T-cell (primary cell): ENCODE measurements at regions of chr10 and their contacts with region 1.

Region 1: DNA sequence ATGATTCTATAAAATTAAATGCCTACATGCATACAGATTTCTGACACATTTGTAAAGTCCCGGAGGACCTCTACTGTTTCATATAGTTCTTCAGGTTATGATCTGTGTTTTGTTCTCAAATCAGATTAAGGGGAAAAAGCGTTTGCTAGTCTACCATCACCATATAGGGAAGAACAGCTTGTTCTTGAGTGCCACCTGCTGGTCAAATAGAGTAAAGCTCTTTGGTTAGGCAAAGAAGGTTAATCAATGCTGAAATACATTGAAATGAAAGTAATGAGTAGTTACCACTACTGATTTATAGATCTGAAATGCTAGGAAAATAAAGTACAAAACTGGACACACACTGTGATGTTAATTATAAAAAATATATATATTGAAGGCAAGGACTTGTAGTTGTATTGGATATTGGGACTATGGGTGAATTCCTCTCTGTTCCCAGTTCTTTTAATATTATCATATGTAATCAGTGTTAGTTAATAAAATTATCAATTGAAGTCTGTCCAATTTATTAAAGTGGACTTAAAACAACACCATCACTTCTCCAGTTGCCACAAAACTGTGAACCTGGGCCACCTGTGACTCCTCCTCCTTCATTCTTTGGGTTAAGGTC is 72.6 kb upstream of the PDLIM1 start:
- DNase-seq: peak in 22 of 35 experiments; percentile 4 to 77 (median 21)
- ATAC-seq: peak; percentile 52 to 72 (median 62)
- H3K4me3 ChIP-seq: no peak overlapping the region
- H3K4me3 Mint-ChIP-seq: no peak overlapping the region
- H3K27ac ChIP-seq: no peak overlapping the region
- H3K27ac Mint-ChIP-seq: no peak overlapping the region
- H3K4me1 ChIP-seq: no peaks in the 10 kb centered on the region
- H3K4me1 Mint-ChIP-seq: no peaks in the 10 kb centered on the region
- H3K27me3 ChIP-seq: no peaks in the 10 kb centered on the region
- H3K27me3 Mint-ChIP-seq: peaks cover 6 to 11% of the 10 kb centered on the region in 2 donors

Region 2: DNA sequence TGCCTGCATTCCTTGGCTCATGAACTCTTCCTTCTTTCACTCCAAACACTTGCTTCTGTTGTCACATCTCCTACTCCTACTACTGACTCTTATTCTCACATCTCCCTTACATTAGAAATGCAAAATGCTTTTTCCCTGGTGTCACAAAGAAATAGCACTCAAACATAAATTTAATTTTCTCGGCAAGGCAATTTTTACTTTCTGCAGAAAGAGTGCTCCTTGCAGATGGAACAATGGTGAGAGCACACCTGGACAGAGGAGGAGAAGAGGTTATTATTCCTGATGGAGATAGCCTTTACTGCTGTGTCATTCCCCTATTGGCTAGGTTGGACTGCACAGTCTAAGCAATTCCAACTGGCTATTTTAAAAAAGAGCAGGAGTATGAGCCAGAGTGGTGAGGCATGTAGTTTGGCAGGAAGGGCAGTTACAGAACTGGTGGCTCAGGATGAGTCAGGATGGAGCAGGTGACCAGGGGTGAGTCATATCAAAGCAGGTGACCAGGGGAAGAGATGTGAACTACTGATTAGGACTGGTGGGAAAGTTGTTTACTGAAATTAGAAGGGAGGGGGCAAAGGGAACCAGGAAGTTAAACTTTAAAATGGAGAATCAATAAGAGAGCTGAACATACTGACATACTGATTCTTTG is 372.0 kb before region 1 on chr10:
- CTCF ChIA-PET with region 1: no interaction called
- POLR2A ChIA-PET with region 1: no interaction called
- DNase-seq: no peak
- ATAC-seq: no peak
- H3K4me3 ChIP-seq: no peak overlapping the region
- H3K4me3 Mint-ChIP-seq: no peak overlapping the region
- H3K27ac ChIP-seq: no peak overlapping the region
- H3K27ac Mint-ChIP-seq: no peak overlapping the region
- H3K4me1 ChIP-seq: no peaks in the 10 kb centered on the region
- H3K4me1 Mint-ChIP-seq: no peaks in the 10 kb centered on the region
- H3K27me3 ChIP-seq: no peaks in the 10 kb centered on the region
- H3K27me3 Mint-ChIP-seq: no peaks in the 10 kb centered on the region

Region 3: DNA sequence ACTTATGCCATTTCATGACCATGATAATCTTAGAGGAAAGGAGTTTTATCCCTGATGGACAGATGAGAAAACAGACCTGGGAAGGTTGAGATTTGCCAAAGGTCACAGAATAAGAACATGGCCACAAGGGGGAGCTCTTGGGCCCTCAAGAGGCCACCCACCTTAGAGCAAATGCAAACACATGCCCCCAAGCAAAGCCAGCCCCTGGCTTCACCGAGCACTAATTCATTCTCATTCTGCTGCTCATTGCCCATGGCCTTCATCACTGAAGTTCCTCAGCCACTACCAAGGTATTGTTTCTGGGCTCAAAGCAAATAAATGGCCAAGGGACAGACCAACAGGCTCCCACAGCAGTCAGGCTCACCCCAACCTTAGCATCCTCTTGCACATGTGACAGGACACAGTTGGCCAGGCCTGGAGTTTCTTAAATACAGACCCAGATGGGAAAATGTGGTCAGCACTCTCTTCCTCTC is 116.8 kb before region 1 on chr10:
- CTCF ChIA-PET with region 1: interaction called, 12 to 33 read pairs
- POLR2A ChIA-PET with region 1: no interaction called
- DNase-seq: peak in 31 of 35 experiments; percentile 5 to 79 (median 43)
- ATAC-seq: peak in 3 of 4 experiments; percentile 43 to 60 (median 44)
- H3K4me3 ChIP-seq: no peak overlapping the region
- H3K4me3 Mint-ChIP-seq: no peak overlapping the region
- H3K27ac ChIP-seq: no peak overlapping the region
- H3K27ac Mint-ChIP-seq: no peak overlapping the region
- H3K4me1 ChIP-seq: no peaks in the 10 kb centered on the region
- H3K4me1 Mint-ChIP-seq: no peaks in the 10 kb centered on the region
- H3K27me3 ChIP-seq: peaks cover 0 to 17% of the 10 kb centered on the region in 2 experiments
- H3K27me3 Mint-ChIP-seq: peaks cover 11 to 19% of the 10 kb centered on the region in 2 donors

Region 4: DNA sequence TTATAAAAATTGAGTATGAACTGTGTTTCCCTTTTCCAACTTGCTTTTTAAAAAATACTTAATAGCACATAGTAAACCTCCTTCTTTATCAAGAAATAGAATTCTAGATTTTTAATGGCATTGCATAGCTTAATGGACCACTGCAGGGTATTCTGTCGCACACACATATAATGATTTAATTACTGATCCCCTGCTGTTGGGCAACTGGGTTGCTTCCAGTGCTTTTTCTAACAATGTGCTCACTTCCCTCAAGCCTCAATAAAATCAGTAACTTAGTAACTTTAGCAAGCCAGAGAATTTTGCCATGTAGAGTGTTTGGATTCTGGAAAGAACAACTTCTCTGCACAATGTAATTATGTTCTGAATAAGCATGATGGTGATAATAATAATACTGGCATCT is 23.5 kb before region 1 on chr10:
- CTCF ChIA-PET with region 1: interaction called in 1 of 2 experiments, 11 read pairs
- POLR2A ChIA-PET with region 1: no interaction called
- DNase-seq: no peak
- ATAC-seq: no peak
- H3K4me3 ChIP-seq: no peak overlapping the region
- H3K4me3 Mint-ChIP-seq: no peak overlapping the region
- H3K27ac ChIP-seq: no peak overlapping the region
- H3K27ac Mint-ChIP-seq: no peak overlapping the region
- H3K4me1 ChIP-seq: no peaks in the 10 kb centered on the region
- H3K4me1 Mint-ChIP-seq: no peaks in the 10 kb centered on the region
- H3K27me3 ChIP-seq: peaks cover 0 to 6% of the 10 kb centered on the region in 2 experiments
- H3K27me3 Mint-ChIP-seq: peaks cover 2 to 5% of the 10 kb centered on the region in 2 donors

Region 5: GRCh38 chr10:95374597-95375209 is 11.3 kb after region 1 on chr10:
- CTCF ChIA-PET with region 1: interaction called, 14 to 20 read pairs
- POLR2A ChIA-PET with region 1: interaction called, 3 read pairs
- DNase-seq: peak in 24 of 35 experiments; percentile 6 to 60 (median 19)
- ATAC-seq: peak in 2 of 4 experiments; percentile 42 to 51
- H3K4me3 ChIP-seq: no peak overlapping the region
- H3K4me3 Mint-ChIP-seq: no peak overlapping the region
- H3K27ac ChIP-seq: no peak overlapping the region
- H3K27ac Mint-ChIP-seq: no peak overlapping the region
- H3K4me1 ChIP-seq: no peaks in the 10 kb centered on the region
- H3K4me1 Mint-ChIP-seq: peaks cover 0 to 10% (median 8%) of the 10 kb centered on the region in 3 donors
- H3K27me3 ChIP-seq: no peaks in the 10 kb centered on the region
- H3K27me3 Mint-ChIP-seq: peaks cover 16 to 23% of the 10 kb centered on the region in 2 donors